Prostate gland (tissue), 2 donors: ENCODE measurements at regions of chr6 and their contacts with region 1.

Region 1: GRCh38 chr6:36360241-36361054 is 23.8 kb upstream of the BNIP5 start:
- DNase-seq: peak; percentile 75
- H3K4me3 ChIP-seq: no peak overlapping the region
- H3K27ac ChIP-seq: no peak overlapping the region
- H3K4me1 ChIP-seq: no peaks in the 10 kb centered on the region
- H3K27me3 ChIP-seq: no peaks in the 10 kb centered on the region
- CTCF ChIP-seq: peak; percentile 48 to 87 (median 83)
- POLR2A ChIP-seq: no peak

Region 2: GRCh38 chr6:35411066-35411465 is 949.4 kb before region 1 on chr6:
- intact Hi-C with region 1: no loop called
- DNase-seq: no peak
- H3K4me3 ChIP-seq: no peak overlapping the region
- H3K27ac ChIP-seq: no peak overlapping the region
- H3K4me1 ChIP-seq: peaks cover 5% of the 10 kb centered on the region
- H3K27me3 ChIP-seq: no peaks in the 10 kb centered on the region
- CTCF ChIP-seq: no peak
- POLR2A ChIP-seq: no peak

Region 3: DNA sequence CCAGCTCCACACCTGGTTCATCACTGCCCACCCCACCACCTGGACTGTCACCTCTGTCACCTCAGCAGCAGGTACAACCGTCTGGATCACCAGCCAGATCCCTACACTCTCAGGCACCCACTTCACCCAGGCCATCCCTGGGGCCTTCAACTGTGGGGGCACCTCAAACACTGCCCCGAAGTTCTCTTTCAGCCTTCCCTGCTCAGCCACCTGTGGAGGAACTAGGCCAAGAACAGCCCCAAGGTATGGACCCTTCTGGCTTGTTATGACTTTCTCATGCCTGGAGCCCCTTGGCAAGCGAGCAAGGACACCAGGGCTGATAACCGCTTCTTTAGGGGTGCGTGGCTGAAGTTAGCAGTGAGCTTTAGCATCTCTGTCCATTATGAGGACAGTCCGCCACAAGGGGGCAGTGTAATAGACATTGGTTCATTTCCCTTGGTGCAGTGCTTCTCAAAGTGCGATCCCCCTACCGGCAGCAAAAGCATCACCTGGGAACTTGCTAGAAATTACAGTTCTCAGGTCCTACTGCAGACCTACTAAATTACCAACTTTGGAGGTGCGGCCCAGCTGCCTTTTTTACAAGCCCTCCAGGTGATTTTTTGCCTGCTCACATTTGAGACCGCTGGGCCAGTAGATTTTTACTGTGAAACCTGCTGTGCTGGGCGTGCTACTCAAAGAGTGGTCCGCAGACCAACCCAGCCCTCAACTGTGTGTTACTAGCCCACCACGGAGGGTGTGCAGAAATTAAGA is 58.0 kb before region 1 on chr6:
- intact Hi-C with region 1: loop called (anchors 1 kb)
- DNase-seq: peak; percentile 92
- H3K4me3 ChIP-seq: no peak overlapping the region
- H3K27ac ChIP-seq: no peak overlapping the region
- H3K4me1 ChIP-seq: no peaks in the 10 kb centered on the region
- H3K27me3 ChIP-seq: no peaks in the 10 kb centered on the region
- CTCF ChIP-seq: peak; percentile 79 to 96 (median 92)
- POLR2A ChIP-seq: no peak